SK-N-SH (cell line): ENCODE measurements at regions of chr11 and their contacts with region 1.

Region 1: GRCh38 chr11:120682866-120683265 is 171.3 kb downstream of the GRIK4 start:
- DNase-seq: no peak
- H3K4me3 ChIP-seq: no peak overlapping the region
- H3K27ac ChIP-seq: no peak overlapping the region
- H3K4me1 ChIP-seq: peaks cover 0 to 3% of the 10 kb centered on the region in 2 experiments; a peak in 1 of 4 replicates
- H3K27me3 ChIP-seq: peaks cover 8% of the 10 kb centered on the region; the same call in 1 of the 2 replicates
- CTCF ChIP-seq: no peak
- EP300 ChIP-seq: no peak
- RAD21 ChIP-seq: no peak

Region 2: DNA sequence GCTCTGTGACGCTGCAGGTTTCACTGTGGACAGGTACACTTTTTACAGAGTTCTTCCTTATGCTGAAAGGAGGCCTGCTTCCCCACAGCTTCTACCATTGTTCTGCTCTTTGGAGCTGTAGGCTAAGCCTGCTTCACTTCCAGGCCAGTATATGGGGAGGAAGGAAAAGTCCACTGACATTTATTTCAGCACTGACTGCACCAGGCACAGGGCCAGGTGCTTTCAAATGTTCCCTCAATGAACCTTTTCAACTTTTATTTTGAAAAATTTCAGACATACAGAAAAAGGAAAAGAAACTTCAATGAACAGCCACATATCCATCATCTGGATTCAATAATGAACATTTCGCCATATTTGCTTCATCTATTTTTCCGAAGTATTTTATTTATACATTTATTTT is 420.9 kb before region 1 on chr11:
- CTCF ChIA-PET with region 1: no interaction called
- POLR2A ChIA-PET with region 1: no interaction called
- DNase-seq: no peak
- H3K4me3 ChIP-seq: no peak overlapping the region
- H3K27ac ChIP-seq: no peak overlapping the region
- H3K4me1 ChIP-seq: no peaks in the 10 kb centered on the region
- H3K27me3 ChIP-seq: peaks cover 30% of the 10 kb centered on the region; the same call in 1 of the 2 replicates
- CTCF ChIP-seq: no peak
- EP300 ChIP-seq: no peak
- RAD21 ChIP-seq: no peak

Region 3: GRCh38 chr11:120335908-120336640 is 346.8 kb before region 1 on chr11 and contains the start of gene ARHGEF12:
- CTCF ChIA-PET with region 1: interaction called, 12 read pairs
- POLR2A ChIA-PET with region 1: no interaction called
- DNase-seq: peak; percentile 98
- H3K4me3 ChIP-seq: peak within 1 kb of the TSS; percentile 91 to 93
- H3K27ac ChIP-seq: peak within 1 kb of the TSS; percentile 81 to 92
- H3K4me1 ChIP-seq: peaks cover 13 to 34% of the 10 kb centered on the region in 2 experiments
- H3K27me3 ChIP-seq: no peaks in the 10 kb centered on the region
- CTCF ChIP-seq: peak; percentile 73
- EP300 ChIP-seq: peak; percentile 41 to 61; a peak in 1 of 4 replicates
- RAD21 ChIP-seq: no peak
- polyA plus RNA-seq, gene ARHGEF12: 12.3 and 15.9 TPM in 2 replicates

Region 4: DNA sequence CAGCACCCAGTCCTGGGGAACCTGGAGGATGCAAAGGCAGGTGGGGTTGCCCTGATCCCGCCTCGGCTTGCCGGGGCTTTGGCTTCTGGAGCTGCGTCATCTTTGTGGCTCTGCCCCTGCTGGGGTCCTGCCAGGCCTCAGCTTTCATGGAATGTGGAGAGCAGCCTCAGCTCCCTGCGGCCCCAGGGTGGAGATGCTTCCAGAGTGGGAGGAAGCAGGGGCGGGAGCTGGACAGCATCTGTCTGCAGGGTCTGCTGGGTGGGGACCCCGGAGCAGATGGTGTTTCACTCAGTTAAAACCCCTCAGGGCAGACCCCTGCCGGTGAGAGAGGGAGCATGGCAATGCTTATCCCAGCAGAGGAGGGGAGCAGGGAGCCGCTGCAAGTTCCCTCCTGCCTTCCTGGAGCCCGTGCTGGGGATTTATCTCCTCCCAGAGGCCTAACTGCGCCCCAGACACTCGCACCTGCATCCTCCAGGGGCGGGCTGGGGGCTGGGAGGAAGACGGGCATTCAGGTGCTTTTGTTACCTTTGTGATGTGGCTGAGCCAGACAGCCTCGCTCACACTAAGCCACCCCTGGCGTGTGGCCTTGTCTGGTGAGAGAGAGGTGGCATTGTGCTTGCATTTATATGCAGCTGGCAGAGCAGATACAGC is 155.6 kb before region 1 on chr11:
- CTCF ChIA-PET with region 1: interaction called, 11 read pairs
- POLR2A ChIA-PET with region 1: no interaction called
- DNase-seq: peak; percentile 90
- H3K4me3 ChIP-seq: no peak overlapping the region
- H3K27ac ChIP-seq: peak overlapping the region in 1 of 2 experiments; percentile 59; a peak in 2 of 4 replicates
- H3K4me1 ChIP-seq: peaks cover 0 to 10% of the 10 kb centered on the region in 2 experiments; a peak in 1 of 4 replicates
- H3K27me3 ChIP-seq: peaks cover 10% of the 10 kb centered on the region
- CTCF ChIP-seq: no peak
- EP300 ChIP-seq: peak in 1 of 2 experiments; percentile 58; a peak in 2 of 4 replicates
- RAD21 ChIP-seq: peak; percentile 22

Region 5: DNA sequence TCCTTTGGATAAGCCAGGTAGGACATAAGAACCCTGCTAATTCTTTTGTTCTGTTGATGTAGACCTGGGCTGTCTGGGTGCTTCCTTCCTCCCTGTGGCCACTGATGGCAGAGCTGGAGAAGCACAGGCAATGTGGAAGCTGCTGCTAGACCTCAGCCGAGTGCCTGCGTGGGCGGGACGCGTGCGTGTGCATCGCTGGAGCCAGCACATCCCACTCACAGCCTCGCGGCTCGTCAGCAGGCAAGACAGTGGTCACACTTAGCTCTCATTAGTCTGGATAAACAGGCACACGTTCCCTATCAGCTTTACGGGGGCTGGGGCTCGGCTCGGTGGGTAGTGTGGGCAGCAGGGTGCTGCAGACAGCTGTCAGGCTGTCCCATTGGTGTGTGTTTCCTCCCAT is 15.6 kb before region 1 on chr11:
- CTCF ChIA-PET with region 1: interaction called, 23 read pairs
- POLR2A ChIA-PET with region 1: no interaction called
- DNase-seq: no peak
- H3K4me3 ChIP-seq: no peak overlapping the region
- H3K27ac ChIP-seq: no peak overlapping the region
- H3K4me1 ChIP-seq: no peaks in the 10 kb centered on the region; a peak in 1 of 4 replicates
- H3K27me3 ChIP-seq: no peaks in the 10 kb centered on the region; the same call in 1 of the 2 replicates
- CTCF ChIP-seq: no peak
- EP300 ChIP-seq: no peak
- RAD21 ChIP-seq: no peak

Region 6: GRCh38 chr11:120703358-120704152 is 20.7 kb after region 1 on chr11:
- CTCF ChIA-PET with region 1: interaction called, 66 read pairs
- POLR2A ChIA-PET with region 1: no interaction called
- DNase-seq: no peak
- H3K4me3 ChIP-seq: no peak overlapping the region
- H3K27ac ChIP-seq: no peak overlapping the region
- H3K4me1 ChIP-seq: peaks cover 0 to 2% of the 10 kb centered on the region in 2 experiments; a peak in 1 of 4 replicates
- H3K27me3 ChIP-seq: no peaks in the 10 kb centered on the region
- CTCF ChIP-seq: no peak
- EP300 ChIP-seq: no peak
- RAD21 ChIP-seq: no peak

Region 7: DNA sequence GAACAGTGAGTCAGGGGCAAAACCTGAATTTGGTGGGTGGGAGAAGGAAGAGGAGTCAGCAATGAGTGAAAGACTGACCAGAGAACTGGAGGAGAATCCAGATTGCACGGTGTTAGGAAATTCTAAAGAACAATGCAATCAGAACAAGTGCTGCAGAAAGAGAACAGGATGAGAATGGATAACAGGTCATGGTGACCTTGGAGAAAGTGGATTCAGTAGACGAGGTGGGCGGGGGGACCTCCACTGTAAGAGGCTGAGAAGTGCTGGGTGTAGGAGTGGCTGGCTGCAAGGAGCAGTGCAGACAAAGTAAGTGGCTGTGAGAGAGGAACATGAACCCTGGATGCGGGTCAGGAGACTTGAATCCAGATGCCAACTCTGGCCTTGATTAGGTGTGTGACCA is 130.0 kb after region 1 on chr11:
- CTCF ChIA-PET with region 1: no interaction called
- POLR2A ChIA-PET with region 1: no interaction called
- DNase-seq: no peak
- H3K4me3 ChIP-seq: no peak overlapping the region
- H3K27ac ChIP-seq: no peak overlapping the region
- H3K4me1 ChIP-seq: peaks cover 0 to 31% of the 10 kb centered on the region in 2 experiments; a peak in 1 of 4 replicates
- H3K27me3 ChIP-seq: no peaks in the 10 kb centered on the region
- CTCF ChIP-seq: no peak
- EP300 ChIP-seq: no peak
- RAD21 ChIP-seq: no peak

Region 8: DNA sequence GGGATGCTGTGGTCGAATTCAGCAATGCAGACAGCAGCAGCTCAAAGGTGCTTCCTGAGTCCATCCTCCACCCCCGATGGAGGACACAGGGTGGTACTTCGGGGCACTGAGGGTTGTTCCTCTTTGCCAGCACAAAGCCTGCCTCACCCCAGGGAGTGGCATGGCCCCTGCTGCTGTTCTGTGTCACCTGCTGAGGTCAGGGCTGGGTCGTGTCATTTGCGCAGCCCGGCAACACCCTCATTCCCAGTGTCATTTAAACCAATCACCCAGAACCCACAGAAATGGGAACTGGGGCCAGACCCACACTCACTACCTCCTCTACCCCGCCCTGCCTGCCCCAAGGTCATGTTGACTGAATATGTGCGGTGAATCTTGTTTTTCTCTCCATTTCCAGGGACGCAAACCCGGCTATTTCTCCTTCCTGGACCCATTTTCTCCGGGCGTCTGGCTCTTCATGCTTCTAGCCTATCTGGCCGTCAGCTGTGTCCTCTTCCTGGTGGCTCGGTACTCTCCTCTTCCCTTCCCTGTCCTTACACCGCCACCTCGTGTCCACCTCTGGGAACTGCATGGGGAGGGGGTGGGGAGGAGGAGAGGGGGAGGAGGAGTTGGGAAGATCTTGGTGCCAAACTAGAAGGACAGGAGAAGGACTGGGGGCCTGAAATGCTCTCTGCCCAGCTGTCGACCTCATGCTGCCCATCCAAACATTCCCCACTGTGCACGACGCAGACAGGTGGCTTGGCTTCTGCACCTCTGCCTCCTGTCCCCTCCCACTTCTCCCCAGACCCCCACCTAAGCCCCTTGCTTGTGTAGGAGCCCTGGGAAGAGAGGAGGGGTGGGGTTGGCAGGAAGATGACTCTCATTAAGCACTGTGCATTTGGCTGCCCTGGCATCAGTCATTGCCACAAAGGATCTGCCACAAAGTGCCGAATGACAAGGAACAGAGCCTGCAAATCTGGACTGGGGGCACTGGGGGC is 269.9 kb after region 1 on chr11:
- CTCF ChIA-PET with region 1: interaction called, 16 read pairs
- POLR2A ChIA-PET with region 1: no interaction called
- DNase-seq: peak; percentile 89
- H3K4me3 ChIP-seq: peak overlapping the region in 1 of 2 experiments; percentile 54; a peak in 1 of 4 replicates
- H3K27ac ChIP-seq: peak overlapping the region in 1 of 2 experiments; percentile 62; a peak in 2 of 4 replicates
- H3K4me1 ChIP-seq: peaks cover 0 to 34% of the 10 kb centered on the region in 2 experiments; a peak in 1 of 4 replicates
- H3K27me3 ChIP-seq: no peaks in the 10 kb centered on the region; the same call in 1 of the 2 replicates
- CTCF ChIP-seq: peak; percentile 73
- EP300 ChIP-seq: no peak
- RAD21 ChIP-seq: peak; percentile 93